GM13977 (cell line): ENCODE measurements at regions of chr13 and their contacts with region 1.

Region 1: GRCh38 chr13:60453490-60453889 is 56.5 kb downstream of the TDRD3 start:
- DNase-seq: no peak
- CTCF ChIP-seq: no peak

Region 2: DNA sequence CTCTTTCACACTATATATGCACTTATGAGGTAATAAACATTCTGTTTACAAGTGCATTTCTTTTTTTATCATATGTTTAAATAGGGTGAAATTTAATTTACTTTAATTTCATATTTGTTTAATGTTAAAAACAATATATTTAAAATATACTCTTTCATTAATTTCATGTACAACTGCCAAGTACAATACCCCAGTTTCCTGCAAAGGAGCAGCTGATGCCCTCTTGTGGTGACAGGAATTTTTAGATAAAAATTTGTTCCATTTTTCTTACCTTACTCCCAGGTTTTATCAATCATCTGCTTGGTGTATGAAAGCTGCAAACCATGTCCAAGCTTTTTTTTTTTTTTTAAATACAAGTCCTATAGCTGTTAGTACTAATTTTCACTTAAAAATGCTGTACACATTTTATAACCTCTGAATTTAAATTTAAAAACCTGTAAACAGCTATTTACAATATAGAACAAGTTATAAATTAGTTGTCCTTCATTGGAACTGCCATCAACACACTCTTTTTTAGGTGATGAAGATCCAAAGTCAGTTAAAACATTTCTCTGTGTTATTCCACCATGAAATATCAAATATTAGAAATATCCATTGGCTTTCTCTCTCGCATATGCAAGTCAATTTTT is 957.3 kb after region 1 on chr13:
- in situ Hi-C with region 1: loop called (anchors 25 kb)
- DNase-seq: peak; percentile 38
- CTCF ChIP-seq: peak; percentile 50